Mammary epithelial cell (primary cell): ENCODE measurements at regions of chr21 and their contacts with region 1.

Region 1: DNA sequence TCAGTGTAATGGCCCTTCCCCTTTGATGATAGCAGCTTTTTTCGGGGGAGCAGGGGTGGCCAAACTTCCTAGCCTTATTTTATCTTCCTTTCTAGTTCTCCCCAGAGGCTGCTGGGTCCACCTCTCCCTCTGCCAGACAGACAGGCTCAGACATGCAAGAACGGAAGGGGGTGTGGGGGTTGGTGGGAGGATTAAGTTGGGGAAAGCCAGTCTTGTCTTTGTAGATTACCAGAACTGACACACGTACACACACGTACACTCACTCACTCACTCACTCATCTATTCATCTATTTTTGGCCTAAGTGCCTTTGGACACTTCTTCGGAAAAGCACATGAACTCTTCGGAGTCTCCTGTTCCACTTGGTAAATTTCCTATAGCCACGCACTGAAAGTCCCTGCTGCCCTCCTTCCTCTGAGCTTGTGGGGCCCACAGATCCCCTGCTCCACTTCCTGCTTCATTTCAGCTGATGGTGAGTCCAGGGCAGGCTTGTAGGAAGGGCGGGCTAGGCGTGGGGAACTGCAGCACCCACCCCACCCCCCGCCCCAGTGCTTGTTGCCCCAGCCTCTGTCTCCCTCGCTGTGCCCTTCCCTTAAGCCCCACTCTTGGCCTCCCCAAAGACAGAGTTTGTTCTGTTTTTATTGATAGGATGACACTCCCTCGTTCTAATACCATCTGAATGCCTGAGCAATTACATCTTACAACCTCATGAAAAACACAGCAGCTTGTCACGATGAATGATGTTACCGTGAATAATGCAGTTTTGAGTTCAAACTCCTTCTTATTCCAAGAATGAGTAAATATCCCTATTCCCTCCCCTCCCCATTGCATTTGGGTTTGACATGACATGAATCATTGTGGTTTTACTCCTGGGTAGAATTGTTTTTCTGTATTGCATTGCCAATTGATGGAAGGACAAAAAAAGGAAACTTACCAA is 60.7 kb upstream of the ATP5PO start:
- DNase-seq: peak; percentile 97
- H3K4me3 ChIP-seq: peak overlapping the region in 2 of 3 experiments; percentile 7
- H3K27ac ChIP-seq: peak overlapping the region; percentile 98
- H3K4me1 ChIP-seq: peaks cover 37% of the 10 kb centered on the region
- H3K27me3 ChIP-seq: no peaks in the 10 kb centered on the region
- CTCF ChIP-seq: no peak

Region 2: DNA sequence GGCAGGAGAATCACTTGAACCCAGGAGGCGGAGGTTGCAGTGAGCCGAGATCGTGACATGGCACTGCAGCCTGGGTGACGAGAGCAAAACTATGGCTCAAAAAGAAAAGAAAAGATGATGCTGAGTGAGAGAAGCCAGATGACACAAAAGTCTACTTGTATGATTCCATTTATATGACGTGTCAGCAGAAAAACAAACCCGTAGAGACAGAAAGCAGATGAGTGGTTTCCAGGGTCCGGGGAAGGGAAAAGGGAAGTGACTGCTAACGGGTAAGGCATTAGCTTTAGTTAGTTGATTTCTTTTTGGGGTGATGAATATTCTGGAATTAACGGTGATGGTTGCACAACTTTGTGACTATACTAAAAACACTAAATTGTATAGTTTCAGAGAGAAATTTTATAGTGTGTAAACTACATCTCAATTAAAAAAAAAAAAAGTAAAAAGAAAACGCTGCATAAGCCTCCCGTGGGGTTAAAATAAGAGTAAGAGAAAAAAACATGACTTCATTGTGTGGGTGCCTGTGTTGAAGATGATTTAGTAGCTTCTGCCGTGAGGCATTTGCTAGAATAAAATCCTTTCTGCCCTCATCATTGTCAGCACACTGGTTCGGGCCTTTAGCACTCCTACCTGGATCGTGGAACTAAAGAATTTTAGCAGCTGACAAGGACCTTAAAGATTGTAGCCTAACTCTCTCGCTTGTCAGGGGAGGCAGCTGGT is 36.0 kb before region 1 on chr21:
- CTCF ChIA-PET with region 1: no interaction called
- dilution Hi-C with region 1: loop called (anchors 5 kb)
- in situ Hi-C with region 1: no loop called
- intact Hi-C with region 1: no loop called
- DNase-seq: no peak
- H3K4me3 ChIP-seq: no peak overlapping the region
- H3K27ac ChIP-seq: no peak overlapping the region
- H3K4me1 ChIP-seq: no peaks in the 10 kb centered on the region
- H3K27me3 ChIP-seq: no peaks in the 10 kb centered on the region
- CTCF ChIP-seq: no peak

Region 3: DNA sequence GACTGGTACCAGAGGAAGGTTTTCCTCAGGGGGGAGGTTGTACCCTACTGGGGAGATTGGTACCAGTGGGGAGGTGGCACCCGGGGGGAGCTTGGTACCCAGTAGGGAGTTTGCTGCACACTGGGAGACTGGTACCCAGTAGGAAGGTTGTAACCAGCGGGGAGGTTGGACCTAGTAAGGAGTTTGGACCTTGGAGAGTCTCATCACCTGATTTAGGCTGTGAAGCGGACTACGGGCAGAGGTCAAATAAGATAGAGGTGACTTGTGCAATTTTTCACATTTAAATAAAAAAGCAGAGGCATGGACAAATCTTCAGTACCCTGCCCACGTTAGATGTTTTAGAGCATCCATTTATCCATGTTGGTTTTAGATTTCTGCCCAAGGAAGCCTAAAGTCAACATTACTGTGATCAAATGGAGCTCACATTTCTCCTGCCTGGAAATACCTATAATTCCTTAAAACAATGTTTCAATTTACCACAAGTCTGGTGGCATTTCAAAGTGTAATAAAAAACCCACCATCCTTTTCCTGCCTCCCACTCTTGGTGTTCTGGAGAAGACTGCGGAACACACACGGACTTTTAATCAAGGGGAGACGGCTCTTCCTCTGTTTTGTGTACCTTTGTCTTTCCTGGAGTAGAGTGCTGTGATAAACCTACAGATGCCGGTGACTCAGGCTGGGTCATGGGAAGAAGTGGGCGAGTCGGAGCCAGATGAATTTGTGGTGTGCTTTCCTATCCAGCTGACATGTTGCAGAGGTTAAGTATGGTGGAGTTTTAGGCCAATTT is 60.9 kb after region 1 on chr21:
- CTCF ChIA-PET with region 1: no interaction called
- dilution Hi-C with region 1: no loop called
- in situ Hi-C with region 1: no loop called
- intact Hi-C with region 1: loop called (anchors 5 kb)
- DNase-seq: peak; percentile 56
- H3K4me3 ChIP-seq: no peak overlapping the region
- H3K27ac ChIP-seq: peak overlapping the region; percentile 49
- H3K4me1 ChIP-seq: peaks cover 27% of the 10 kb centered on the region
- H3K27me3 ChIP-seq: no peaks in the 10 kb centered on the region
- CTCF ChIP-seq: no peak

Region 4: GRCh38 chr21:34073032-34073869 is 96.9 kb after region 1 on chr21 and contains the starts of genes MRPS6 and SLC5A3:
- CTCF ChIA-PET with region 1: no interaction called
- dilution Hi-C with region 1: no loop called
- in situ Hi-C with region 1: no loop called
- intact Hi-C with region 1: loop called (anchors 2 kb)
- DNase-seq: peak; percentile 76
- H3K4me3 ChIP-seq: peak within 1 kb of the TSS; percentile 88 to 90 (median 88)
- H3K27ac ChIP-seq: peak within 1 kb of the TSS; percentile 75
- H3K4me1 ChIP-seq: peaks cover 21% of the 10 kb centered on the region
- H3K27me3 ChIP-seq: no peaks in the 10 kb centered on the region
- CTCF ChIP-seq: no peak
- total RNA-seq, gene MRPS6: 10.2 to 65.9 TPM
- total RNA-seq, gene SLC5A3: 10.8 to 17.5 TPM